ENCODE measurements at regions of chr15 and their contacts with region 1.

Region 1: DNA sequence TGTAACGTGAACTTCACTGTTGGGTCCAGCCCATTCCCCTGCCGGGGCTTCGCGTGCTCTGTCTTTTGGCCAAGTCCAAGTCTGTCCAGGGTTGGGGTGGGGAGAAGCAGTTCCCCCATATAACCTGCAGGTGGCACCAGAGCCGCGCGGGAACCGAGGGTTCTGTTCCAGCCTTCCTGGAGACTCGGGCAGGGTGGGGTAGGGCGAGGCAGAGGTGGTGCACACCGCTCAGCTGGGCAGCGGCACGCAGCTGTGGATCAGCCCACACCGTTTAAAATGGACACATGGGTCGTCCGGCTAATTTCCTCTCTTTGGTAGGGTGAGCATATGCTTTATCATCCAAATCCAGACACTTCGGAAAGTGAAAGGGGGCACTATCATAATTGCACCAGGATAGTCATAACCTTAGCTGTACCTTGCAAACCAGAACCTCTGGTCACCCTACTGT is 118.1 kb downstream of the TBC1D2B start:
- DNase-seq: peak; percentile 58 to 99
- H3K4me3 ChIP-seq: no peak overlapping the region
- H3K27ac ChIP-seq: no peak overlapping the region
- H3K4me1 ChIP-seq: peaks cover 0 to 5% (median 1%) of the 10 kb centered on the region in 4 experiments; a peak in 4 of 7 replicates
- H3K27me3 ChIP-seq: no peaks in the 10 kb centered on the region; a peak in 1 of 7 replicates
- CTCF ChIP-seq: peak; percentile 90 to 97 (median 97)
- EP300 ChIP-seq: no peak
- POLR2A ChIP-seq: no peak
- RAD21 ChIP-seq: peak; percentile 97 to 98

Region 2: DNA sequence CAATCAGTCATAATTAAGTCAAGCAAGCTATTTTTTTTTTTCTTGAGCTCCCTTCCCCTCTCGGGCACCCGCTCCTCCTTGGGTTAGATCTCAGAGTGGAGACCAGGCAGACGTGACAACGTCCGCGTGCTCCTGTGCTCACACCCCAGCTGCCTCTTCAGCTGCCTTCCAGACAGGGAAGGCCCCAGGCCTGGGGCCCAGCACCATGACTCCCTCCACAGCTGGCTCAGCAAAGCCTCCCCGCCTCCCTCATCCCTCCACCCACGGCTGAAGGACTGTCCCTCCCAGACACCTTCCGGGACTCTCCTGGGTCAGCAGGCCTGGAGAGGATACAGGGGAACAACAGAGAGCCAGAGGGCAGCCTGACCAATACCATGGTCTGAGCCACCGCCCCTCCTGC is 238.8 kb before region 1 on chr15:
- CTCF ChIA-PET with region 1: no interaction called
- POLR2A ChIA-PET with region 1: no interaction called
- DNase-seq: no peak
- H3K4me3 ChIP-seq: no peak overlapping the region
- H3K27ac ChIP-seq: no peak overlapping the region
- H3K4me1 ChIP-seq: peaks cover 0 to 2% (median 0%) of the 10 kb centered on the region in 4 experiments; a peak in 1 of 7 replicates
- H3K27me3 ChIP-seq: no peaks in the 10 kb centered on the region
- CTCF ChIP-seq: no peak
- EP300 ChIP-seq: no peak
- POLR2A ChIP-seq: no peak
- RAD21 ChIP-seq: no peak

Region 3: DNA sequence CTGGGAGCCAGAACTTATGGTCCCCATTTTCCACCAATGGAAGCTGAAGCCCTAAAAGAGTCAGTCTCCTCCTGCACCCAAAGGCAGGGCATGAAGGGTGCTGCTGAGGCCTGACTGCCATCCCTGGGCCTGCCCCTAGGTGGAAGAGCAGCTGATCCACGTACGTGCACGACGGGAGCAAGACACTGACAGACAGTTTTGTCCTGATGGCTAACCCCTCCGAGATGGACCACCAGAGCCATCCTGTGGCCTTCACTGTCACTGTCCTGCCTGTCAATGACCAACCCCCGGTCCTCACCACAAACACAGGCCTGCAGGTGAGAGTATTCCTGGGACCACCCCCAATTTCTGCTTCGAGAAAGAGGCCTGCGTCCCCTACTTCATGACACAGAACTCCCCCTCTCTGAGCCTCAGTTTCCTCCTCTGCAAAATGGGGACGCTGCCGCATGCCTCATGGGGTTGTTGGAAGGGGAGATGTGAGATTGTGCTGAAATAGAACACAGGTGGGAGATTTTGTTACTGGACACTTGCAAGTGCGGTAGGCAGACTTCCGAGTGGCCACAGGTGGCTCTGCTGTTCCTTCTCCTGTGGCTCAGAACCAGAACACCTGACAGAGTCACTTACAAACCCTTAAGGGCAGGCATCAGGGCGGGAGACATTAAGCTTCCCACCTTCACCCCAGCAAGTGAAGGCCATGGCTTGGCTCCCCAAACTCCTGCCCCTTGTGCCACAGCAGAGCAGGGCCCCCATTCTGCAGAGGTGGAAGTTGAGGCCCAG is 57.3 kb before region 1 on chr15:
- CTCF ChIA-PET with region 1: interaction called, 16 read pairs
- POLR2A ChIA-PET with region 1: no interaction called
- DNase-seq: no peak
- H3K4me3 ChIP-seq: no peak overlapping the region
- H3K27ac ChIP-seq: no peak overlapping the region
- H3K4me1 ChIP-seq: peaks cover 0 to 2% (median 0%) of the 10 kb centered on the region in 4 experiments; a peak in 2 of 7 replicates
- H3K27me3 ChIP-seq: no peaks in the 10 kb centered on the region
- CTCF ChIP-seq: peak; percentile 32 to 60 (median 49)
- EP300 ChIP-seq: no peak
- POLR2A ChIP-seq: no peak
- RAD21 ChIP-seq: no peak

Region 4: GRCh38 chr15:77907824-77908751 is 51.4 kb before region 1 on chr15:
- CTCF ChIA-PET with region 1: interaction called, 16 read pairs
- POLR2A ChIA-PET with region 1: no interaction called
- DNase-seq: no peak
- H3K4me3 ChIP-seq: no peak overlapping the region
- H3K27ac ChIP-seq: no peak overlapping the region
- H3K4me1 ChIP-seq: peaks cover 0 to under 1% (median 0%) of the 10 kb centered on the region in 4 experiments; a peak in 2 of 7 replicates
- H3K27me3 ChIP-seq: no peaks in the 10 kb centered on the region
- CTCF ChIP-seq: peak in 1 of 3 experiments; percentile 26; a peak in 1 of 4 replicates
- EP300 ChIP-seq: no peak
- POLR2A ChIP-seq: no peak
- RAD21 ChIP-seq: no peak

Region 5: GRCh38 chr15:77983708-77984445 is 24.4 kb after region 1 on chr15:
- CTCF ChIA-PET with region 1: interaction called, 20 read pairs
- POLR2A ChIA-PET with region 1: no interaction called
- DNase-seq: peak in 1 of 2 experiments; percentile 41
- H3K4me3 ChIP-seq: no peak overlapping the region
- H3K27ac ChIP-seq: no peak overlapping the region
- H3K4me1 ChIP-seq: peaks cover 0 to 16% (median 11%) of the 10 kb centered on the region in 4 experiments; a peak in 6 of 7 replicates
- H3K27me3 ChIP-seq: no peaks in the 10 kb centered on the region
- CTCF ChIP-seq: peak in 2 of 3 experiments; percentile 18 to 45; a peak in 1 of 4 replicates
- EP300 ChIP-seq: no peak
- POLR2A ChIP-seq: no peak
- RAD21 ChIP-seq: peak in 1 of 2 experiments; percentile 33; a peak in 1 of 4 replicates

Region 6: GRCh38 chr15:77992356-77993222 is 33.1 kb after region 1 on chr15:
- CTCF ChIA-PET with region 1: interaction called, 22 read pairs
- POLR2A ChIA-PET with region 1: no interaction called
- DNase-seq: no peak
- H3K4me3 ChIP-seq: no peak overlapping the region
- H3K27ac ChIP-seq: no peak overlapping the region
- H3K4me1 ChIP-seq: peaks cover 0 to 11% (median 3%) of the 10 kb centered on the region in 4 experiments; a peak in 5 of 7 replicates
- H3K27me3 ChIP-seq: no peaks in the 10 kb centered on the region
- CTCF ChIP-seq: no peak
- EP300 ChIP-seq: no peak
- POLR2A ChIP-seq: no peak
- RAD21 ChIP-seq: no peak

Region 7: GRCh38 chr15:78140292-78140691 is 180.8 kb after region 1 on chr15:
- CTCF ChIA-PET with region 1: no interaction called
- POLR2A ChIA-PET with region 1: no interaction called
- DNase-seq: no peak
- H3K4me3 ChIP-seq: no peak overlapping the region
- H3K27ac ChIP-seq: no peak overlapping the region
- H3K4me1 ChIP-seq: no peaks in the 10 kb centered on the region
- H3K27me3 ChIP-seq: no peaks in the 10 kb centered on the region
- CTCF ChIP-seq: no peak
- EP300 ChIP-seq: no peak
- POLR2A ChIP-seq: no peak
- RAD21 ChIP-seq: no peak